GM12878 (cell line): ENCODE measurements at regions of chr13 and their contacts with region 1.

Region 1: GRCh38 chr13:102286326-102286725 is 115.5 kb downstream of the FGF14 start:
- DNase-seq: no peak
- ATAC-seq: no peak
- H3K4me3 ChIP-seq: no peak overlapping the region
- H3K27ac ChIP-seq: no peak overlapping the region
- H3K4me1 ChIP-seq: no peaks in the 10 kb centered on the region
- H3K27me3 ChIP-seq: no peaks in the 10 kb centered on the region
- CTCF ChIP-seq: no peak
- EP300 ChIP-seq: no peak
- POLR2A ChIP-seq: no peak
- RAD21 ChIP-seq: no peak

Region 2: GRCh38 chr13:102234618-102235017 is 51.7 kb before region 1 on chr13:
- CTCF ChIA-PET with region 1: no interaction called
- POLR2A ChIA-PET with region 1: no interaction called
- RAD21 ChIA-PET with region 1: no interaction called
- SMC1A ChIA-PET with region 1: no interaction called
- in situ Hi-C with region 1: loop called (anchors 5 kb)
- intact Hi-C with region 1: no loop called
- DNase-seq: no peak
- ATAC-seq: no peak
- H3K4me3 ChIP-seq: no peak overlapping the region
- H3K27ac ChIP-seq: no peak overlapping the region
- H3K4me1 ChIP-seq: no peaks in the 10 kb centered on the region
- H3K27me3 ChIP-seq: no peaks in the 10 kb centered on the region; a peak in 1 of 4 replicates
- CTCF ChIP-seq: no peak
- EP300 ChIP-seq: no peak
- POLR2A ChIP-seq: no peak
- RAD21 ChIP-seq: no peak

Region 3: DNA sequence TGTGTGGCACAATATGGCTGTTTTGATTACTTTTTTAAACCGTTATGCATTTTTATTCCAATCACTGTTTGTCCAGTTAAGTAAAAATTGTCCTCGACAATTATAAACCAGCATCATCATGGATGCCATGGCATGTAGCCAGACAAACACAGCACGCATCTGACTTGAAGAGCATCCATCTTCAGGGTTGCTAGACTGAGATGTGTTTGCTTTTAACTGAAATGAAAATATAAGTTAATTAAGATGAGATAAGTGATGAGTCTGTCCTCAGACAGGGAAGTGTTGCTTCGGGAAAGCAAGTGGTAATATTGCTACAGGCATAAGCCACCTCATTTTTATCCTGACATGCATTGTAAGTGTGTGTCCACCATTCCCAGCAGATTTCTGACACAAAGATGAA is 217.7 kb after region 1 on chr13:
- CTCF ChIA-PET with region 1: no interaction called
- POLR2A ChIA-PET with region 1: no interaction called
- RAD21 ChIA-PET with region 1: no interaction called
- SMC1A ChIA-PET with region 1: no interaction called
- in situ Hi-C with region 1: no loop called
- intact Hi-C with region 1: no loop called
- DNase-seq: no peak
- ATAC-seq: no peak
- H3K4me3 ChIP-seq: no peak overlapping the region
- H3K27ac ChIP-seq: no peak overlapping the region
- H3K4me1 ChIP-seq: no peaks in the 10 kb centered on the region
- H3K27me3 ChIP-seq: no peaks in the 10 kb centered on the region
- CTCF ChIP-seq: no peak
- EP300 ChIP-seq: no peak
- POLR2A ChIP-seq: no peak
- RAD21 ChIP-seq: no peak